Mammary epithelial cell (primary cell): ENCODE measurements at regions of chr14 and their contacts with region 1.

Region 1: DNA sequence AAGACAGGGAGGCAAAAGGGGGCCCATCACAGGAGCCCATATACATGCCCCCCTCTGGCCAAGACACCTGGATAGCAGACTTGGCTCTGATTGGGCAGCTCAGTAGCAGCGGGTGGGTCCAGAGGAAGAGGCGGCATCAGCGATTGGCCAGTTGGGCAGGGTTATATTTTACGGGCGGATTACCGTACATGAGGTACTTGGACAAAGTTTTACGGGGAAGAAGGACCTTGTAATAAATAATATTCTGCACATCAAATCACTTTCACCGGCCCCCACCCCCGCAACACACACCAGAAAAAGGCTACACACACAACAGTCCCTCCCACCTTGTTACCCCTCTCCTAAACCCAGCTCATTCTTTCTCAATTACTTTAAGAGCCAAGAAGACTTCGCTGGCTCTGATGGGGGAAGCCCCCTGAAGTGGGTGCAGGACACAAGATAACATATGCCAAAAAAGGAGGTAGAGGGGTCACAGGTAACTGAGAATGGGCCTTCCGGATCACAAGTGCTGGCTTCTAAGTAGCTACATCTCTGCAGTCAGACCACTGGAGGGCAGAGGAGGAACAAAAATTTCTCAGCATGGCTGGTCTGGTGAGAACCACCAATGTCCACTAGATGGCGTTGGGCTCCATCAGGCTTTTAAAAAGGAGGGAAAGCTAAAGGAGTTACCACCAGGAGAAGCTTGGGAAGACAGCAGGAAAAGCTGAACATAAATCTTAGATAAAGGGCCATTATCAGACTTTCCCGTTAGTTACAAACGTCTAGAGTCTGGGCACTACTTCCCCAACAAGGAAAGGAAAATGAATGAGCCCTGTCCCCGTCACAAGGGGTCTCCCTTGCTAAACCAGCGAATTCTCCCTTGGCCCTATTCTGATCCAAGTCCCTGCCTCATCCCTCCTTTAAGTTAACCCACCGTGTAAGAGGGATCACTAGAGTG is 11.4 kb upstream of the CDH24 start:
- DNase-seq: peak; percentile 83
- H3K4me3 ChIP-seq: no peak overlapping the region
- H3K27ac ChIP-seq: no peak overlapping the region
- H3K4me1 ChIP-seq: peaks cover 10% of the 10 kb centered on the region
- H3K27me3 ChIP-seq: no peaks in the 10 kb centered on the region
- CTCF ChIP-seq: peak; percentile 100

Region 2: DNA sequence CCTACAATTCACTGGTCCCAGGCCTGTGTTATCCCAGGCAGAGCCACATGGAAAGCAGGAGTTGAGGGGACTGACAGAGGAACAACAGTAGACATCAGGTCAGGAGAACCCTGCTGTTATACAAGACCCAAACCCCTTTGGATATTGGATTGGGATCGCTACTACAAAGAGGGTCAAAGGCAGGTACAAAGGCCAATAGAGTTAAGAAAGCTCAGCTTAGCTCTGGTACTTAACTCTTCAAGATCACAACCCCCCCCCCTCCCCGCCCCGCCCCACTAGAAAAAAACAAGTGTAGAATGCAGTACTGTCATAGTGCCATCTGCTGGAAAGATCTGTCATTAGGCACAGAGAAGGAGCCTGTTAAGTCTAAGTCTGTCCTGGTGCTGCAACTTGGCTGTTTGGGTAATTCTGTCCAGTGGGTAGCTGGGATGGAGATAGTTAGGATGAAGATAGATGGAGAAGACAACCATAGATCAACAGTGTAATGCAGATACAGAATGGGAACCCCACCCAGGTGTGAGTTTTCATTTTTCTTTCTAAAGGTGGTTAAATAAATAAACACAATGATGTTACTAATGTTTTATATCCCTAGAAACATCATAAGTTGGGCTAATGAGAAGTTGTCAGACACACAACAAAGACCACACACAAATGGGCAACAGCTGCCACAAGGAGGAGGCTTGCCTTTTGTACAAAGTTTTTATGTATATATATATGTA is 168.5 kb before region 1 on chr14:
- CTCF ChIA-PET with region 1: no interaction called
- dilution Hi-C with region 1: no loop called
- in situ Hi-C with region 1: no loop called
- intact Hi-C with region 1: no loop called
- DNase-seq: peak; percentile 56
- H3K4me3 ChIP-seq: no peak overlapping the region
- H3K27ac ChIP-seq: no peak overlapping the region
- H3K4me1 ChIP-seq: peaks cover 20% of the 10 kb centered on the region
- H3K27me3 ChIP-seq: no peaks in the 10 kb centered on the region
- CTCF ChIP-seq: peak; percentile 66 to 68

Region 3: GRCh38 chr14:22973217-22974032 is 95.3 kb before region 1 on chr14:
- CTCF ChIA-PET with region 1: interaction called, 3 read pairs
- dilution Hi-C with region 1: loop called (anchors 5 kb)
- in situ Hi-C with region 1: no loop called
- intact Hi-C with region 1: no loop called
- DNase-seq: peak; percentile 57
- H3K4me3 ChIP-seq: no peak overlapping the region
- H3K27ac ChIP-seq: no peak overlapping the region
- H3K4me1 ChIP-seq: peaks cover 40% of the 10 kb centered on the region
- H3K27me3 ChIP-seq: no peaks in the 10 kb centered on the region
- CTCF ChIP-seq: peak; percentile 51 to 64

Region 4: GRCh38 chr14:23095196-23096108 is 26.7 kb after region 1 on chr14 and contains the start of gene C14orf119:
- CTCF ChIA-PET with region 1: interaction called, 7 read pairs
- dilution Hi-C with region 1: no loop called
- in situ Hi-C with region 1: no loop called
- intact Hi-C with region 1: loop called (anchors 2 kb)
- DNase-seq: peak; percentile 99
- H3K4me3 ChIP-seq: peak within 1 kb of the TSS; percentile 68 to 92 (median 86)
- H3K27ac ChIP-seq: peak within 1 kb of the TSS; percentile 97
- H3K4me1 ChIP-seq: peaks cover 23% of the 10 kb centered on the region
- H3K27me3 ChIP-seq: no peaks in the 10 kb centered on the region
- CTCF ChIP-seq: no peak
- total RNA-seq, gene C14orf119: 39.2 to 57.6 TPM

Region 5: GRCh38 chr14:23104591-23105347 is 36.0 kb after region 1 on chr14 and contains the start of gene CIROP:
- CTCF ChIA-PET with region 1: interaction called, 7 read pairs
- dilution Hi-C with region 1: no loop called
- in situ Hi-C with region 1: loop called in 1 of 2 experiments (anchors 5 kb)
- intact Hi-C with region 1: loop called (anchors 1 kb)
- DNase-seq: no peak
- H3K4me3 ChIP-seq: no peak within 1 kb of the TSS
- H3K27ac ChIP-seq: no peak within 1 kb of the TSS
- H3K4me1 ChIP-seq: no peaks in the 10 kb centered on the region
- H3K27me3 ChIP-seq: no peaks in the 10 kb centered on the region
- CTCF ChIP-seq: no peak
- total RNA-seq, gene CIROP: not detected

Region 6: GRCh38 chr14:23109769-23110168 is 41.0 kb after region 1 on chr14:
- CTCF ChIA-PET with region 1: interaction called, 7 read pairs
- dilution Hi-C with region 1: no loop called
- in situ Hi-C with region 1: loop called in 1 of 2 experiments (anchors 5 kb)
- intact Hi-C with region 1: loop called (anchors 1 kb)
- DNase-seq: no peak
- H3K4me3 ChIP-seq: no peak overlapping the region
- H3K27ac ChIP-seq: no peak overlapping the region
- H3K4me1 ChIP-seq: peaks cover 9% of the 10 kb centered on the region
- H3K27me3 ChIP-seq: no peaks in the 10 kb centered on the region
- CTCF ChIP-seq: no peak